ENCODE measurements at regions of chr5 and their contacts with region 1.

Region 1: DNA sequence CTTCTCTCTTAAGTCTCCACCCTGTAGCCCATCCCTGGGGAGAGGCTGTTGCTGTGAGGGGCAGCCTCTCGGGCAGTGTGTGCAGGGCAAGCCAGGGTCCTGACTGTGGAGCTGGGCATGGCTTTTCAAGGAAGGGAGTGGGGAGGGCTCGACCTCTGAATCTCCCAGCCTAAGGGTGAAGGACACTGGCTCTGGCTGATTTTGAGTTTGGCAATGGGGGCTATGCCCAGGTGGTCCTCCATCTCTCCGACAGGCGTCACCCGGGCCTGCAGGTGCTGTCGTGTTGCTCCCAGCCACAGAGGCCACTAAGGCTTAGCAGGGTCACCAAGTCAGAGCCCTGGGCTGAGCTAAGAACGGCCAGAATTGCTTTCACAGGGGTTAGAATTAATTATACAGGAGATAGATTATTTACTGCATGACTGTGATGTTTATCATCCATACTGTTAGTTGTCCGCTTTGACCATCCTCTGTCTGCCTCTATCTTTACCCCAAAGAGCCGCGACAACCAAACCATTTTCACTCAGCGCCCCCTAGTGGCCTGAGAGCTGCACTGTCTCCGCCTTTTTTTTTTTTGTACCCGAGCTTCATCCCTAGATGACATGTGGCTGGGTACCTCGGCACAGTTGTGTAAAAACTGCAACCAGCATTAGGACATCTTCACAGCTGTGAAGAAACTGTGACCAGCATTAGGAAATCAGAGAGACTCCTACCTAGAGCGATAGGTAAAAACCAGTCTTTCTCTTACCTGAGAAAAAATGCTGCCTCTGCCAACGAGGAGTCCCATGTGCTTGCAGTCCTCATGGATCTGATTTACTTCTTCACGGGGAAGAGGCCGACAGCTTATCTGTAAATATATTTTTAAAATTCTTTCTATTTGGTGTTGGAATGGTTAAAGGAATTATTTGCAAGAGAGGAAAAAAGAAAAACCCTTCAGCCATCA is 44.5 kb downstream of the AGXT2 start:
- DNase-seq: peak; percentile 76
- H3K4me3 Mint-ChIP-seq: no peak overlapping the region
- H3K27ac Mint-ChIP-seq: no peak overlapping the region
- H3K4me1 Mint-ChIP-seq: no peaks in the 10 kb centered on the region
- H3K27me3 Mint-ChIP-seq: peaks cover 16% of the 10 kb centered on the region

Region 2: GRCh38 chr5:34474573-34475021 is 528.7 kb before region 1 on chr5:
- CTCF ChIA-PET with region 1: interaction called, 4 read pairs
- intact Hi-C with region 1: loop called (anchors 1 kb)
- DNase-seq: peak; percentile 34
- H3K4me3 Mint-ChIP-seq: no peak overlapping the region
- H3K27ac Mint-ChIP-seq: no peak overlapping the region
- H3K4me1 Mint-ChIP-seq: no peaks in the 10 kb centered on the region
- H3K27me3 Mint-ChIP-seq: peaks cover 11% of the 10 kb centered on the region

Region 3: GRCh38 chr5:34522599-34523386 is 480.5 kb before region 1 on chr5:
- CTCF ChIA-PET with region 1: interaction called, 14 read pairs
- intact Hi-C with region 1: loop called (anchors 1 kb)
- DNase-seq: peak; percentile 73
- H3K4me3 Mint-ChIP-seq: no peak overlapping the region
- H3K27ac Mint-ChIP-seq: no peak overlapping the region
- H3K4me1 Mint-ChIP-seq: peaks cover 4% of the 10 kb centered on the region
- H3K27me3 Mint-ChIP-seq: peaks cover 3% of the 10 kb centered on the region

Region 4: DNA sequence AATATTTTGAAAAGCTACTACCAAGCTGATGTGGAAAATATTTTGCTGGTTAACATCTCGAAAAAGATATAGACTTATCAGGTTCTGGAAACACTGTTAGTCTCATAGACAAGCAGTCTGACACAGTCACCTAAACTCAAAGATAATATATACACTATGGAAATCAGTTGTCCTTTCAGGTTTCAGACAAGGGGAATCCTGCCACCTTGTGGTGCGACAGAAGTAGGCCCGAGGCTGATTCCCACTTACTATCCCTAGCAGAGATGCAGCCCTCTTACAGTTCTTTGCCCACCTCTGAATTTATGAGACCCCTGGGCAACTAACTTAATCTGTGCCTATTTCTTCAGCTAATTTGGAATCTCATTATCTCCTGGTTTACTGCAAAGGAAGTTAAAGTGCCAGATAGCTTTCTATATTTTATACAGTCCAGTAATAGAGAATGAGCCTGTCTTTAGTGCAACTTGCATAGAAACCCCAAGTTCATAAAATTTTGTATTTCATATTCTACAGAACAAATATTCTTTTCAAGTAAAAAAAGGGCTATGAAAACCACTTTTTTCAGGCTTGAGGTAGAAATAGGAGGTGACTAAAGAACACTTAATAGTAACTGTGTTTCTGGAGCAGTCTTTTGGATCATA is 104.9 kb before region 1 on chr5:
- CTCF ChIA-PET with region 1: no interaction called
- intact Hi-C with region 1: loop called (anchors 5 kb)
- DNase-seq: peak; percentile 77
- H3K4me3 Mint-ChIP-seq: no peak overlapping the region
- H3K27ac Mint-ChIP-seq: no peak overlapping the region
- H3K4me1 Mint-ChIP-seq: no peaks in the 10 kb centered on the region
- H3K27me3 Mint-ChIP-seq: no peaks in the 10 kb centered on the region

Region 5: GRCh38 chr5:34915139-34915855 is 88.0 kb before region 1 on chr5 and contains the starts of genes BRIX1 and RAD1:
- CTCF ChIA-PET with region 1: interaction called, 4 read pairs
- intact Hi-C with region 1: loop called (anchors 1 kb)
- DNase-seq: peak; percentile 97
- H3K4me3 Mint-ChIP-seq: no peak within 1 kb of the TSS
- H3K27ac Mint-ChIP-seq: peak within 1 kb of the TSS; percentile 52
- H3K4me1 Mint-ChIP-seq: peaks cover 32% of the 10 kb centered on the region
- H3K27me3 Mint-ChIP-seq: no peaks in the 10 kb centered on the region
- total RNA-seq, gene BRIX1: 66.5 to 69.0 TPM
- total RNA-seq, gene RAD1: 38.8 to 40.7 TPM

Region 6: GRCh38 chr5:34957857-34958690 is 45.2 kb before region 1 on chr5:
- CTCF ChIA-PET with region 1: interaction called, 26 read pairs
- intact Hi-C with region 1: loop called (anchors 1 kb)
- DNase-seq: peak; percentile 32
- H3K4me3 Mint-ChIP-seq: no peak overlapping the region
- H3K27ac Mint-ChIP-seq: no peak overlapping the region
- H3K4me1 Mint-ChIP-seq: peaks cover 14% of the 10 kb centered on the region
- H3K27me3 Mint-ChIP-seq: no peaks in the 10 kb centered on the region

Measured in activated naive CD4-positive, alpha-beta T cell treated with anti-CD3 and anti-CD28 coated beads for 36 hours (primary cell).